Naive thymus-derived CD8-positive, alpha-beta T cell (primary cell): ENCODE measurements at regions of chr11 and their contacts with region 1.

Region 1: GRCh38 chr11:64878494-64879243 is at the start of gene EHD1:
- DNase-seq: peak; percentile 99 to 100 (median 100)
- ATAC-seq: peak; percentile 73 to 81
- H3K4me3 Mint-ChIP-seq: peak within 1 kb of the TSS; percentile 92 to 99 (median 98)
- H3K27ac Mint-ChIP-seq: peak within 1 kb of the TSS; percentile 90 to 99 (median 96)
- H3K4me1 Mint-ChIP-seq: peaks cover 41 to 71% (median 64%) of the 10 kb centered on the region in 4 donors
- H3K27me3 Mint-ChIP-seq: no peaks in the 10 kb centered on the region
- polyA plus RNA-seq, gene EHD1: 137 to 164 (median 154) TPM

Region 2: GRCh38 chr11:64846998-64847666 is 31.5 kb before region 1 on chr11:
- POLR2A ChIA-PET with region 1: interaction called, 2,449 read pairs
- DNase-seq: peak; percentile 81 to 98 (median 90)
- ATAC-seq: peak; percentile 46 to 56
- H3K4me3 Mint-ChIP-seq: peak overlapping the region in 6 of 10 donors; percentile 36 to 74 (median 56)
- H3K27ac Mint-ChIP-seq: peak overlapping the region in 9 of 10 donors; percentile 32 to 88 (median 79)
- H3K4me1 Mint-ChIP-seq: peaks cover 35 to 69% (median 64%) of the 10 kb centered on the region in 4 donors
- H3K27me3 Mint-ChIP-seq: no peaks in the 10 kb centered on the region

Region 3: DNA sequence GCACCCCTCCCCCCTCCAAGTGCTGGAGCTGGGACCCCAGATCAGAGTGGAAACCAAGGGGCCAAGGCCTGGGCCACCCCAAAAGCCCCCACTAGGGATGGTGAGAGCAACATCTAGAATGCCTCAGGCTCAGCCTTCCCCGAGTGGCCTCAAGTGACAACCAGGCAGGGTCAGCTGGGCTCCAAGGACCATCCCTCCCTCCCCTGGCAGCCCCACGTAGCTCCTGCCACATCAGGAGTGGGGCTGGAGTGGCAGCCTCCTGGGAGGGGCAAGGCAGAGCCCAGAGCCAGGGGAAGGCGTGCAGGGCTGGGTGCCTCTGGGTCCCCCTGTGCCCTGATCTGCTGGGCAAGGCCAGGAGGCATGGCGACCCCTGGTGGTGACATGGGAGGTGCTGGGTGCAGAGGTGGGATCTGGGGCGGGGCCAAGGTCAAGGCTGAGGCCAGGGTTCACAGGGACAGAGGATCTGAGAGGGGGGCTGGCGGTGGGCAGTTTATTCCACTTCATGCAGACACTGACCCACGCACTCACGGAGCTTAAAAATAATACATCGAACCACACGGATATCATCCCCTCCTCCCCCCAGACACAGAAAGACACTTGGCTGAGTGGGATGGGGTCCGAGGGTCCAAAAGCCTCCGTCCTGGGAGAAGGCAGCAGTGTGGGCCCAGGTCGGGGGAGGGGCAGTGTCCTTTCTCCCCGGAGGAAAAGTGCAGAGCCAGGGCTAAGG is 15.6 kb after region 1 on chr11:
- POLR2A ChIA-PET with region 1: interaction called, 64 read pairs
- DNase-seq: peak; percentile 80 to 95 (median 90)
- ATAC-seq: peak; percentile 93 to 98
- H3K4me3 Mint-ChIP-seq: no peak overlapping the region
- H3K27ac Mint-ChIP-seq: peak overlapping the region in 3 of 10 donors; percentile 9 to 68 (median 45)
- H3K4me1 Mint-ChIP-seq: peaks cover 6 to 11% (median 8%) of the 10 kb centered on the region in 4 donors
- H3K27me3 Mint-ChIP-seq: no peaks in the 10 kb centered on the region